HEK293 (cell line): ENCODE measurements at regions of chr11 and their contacts with region 1.

Region 1: DNA sequence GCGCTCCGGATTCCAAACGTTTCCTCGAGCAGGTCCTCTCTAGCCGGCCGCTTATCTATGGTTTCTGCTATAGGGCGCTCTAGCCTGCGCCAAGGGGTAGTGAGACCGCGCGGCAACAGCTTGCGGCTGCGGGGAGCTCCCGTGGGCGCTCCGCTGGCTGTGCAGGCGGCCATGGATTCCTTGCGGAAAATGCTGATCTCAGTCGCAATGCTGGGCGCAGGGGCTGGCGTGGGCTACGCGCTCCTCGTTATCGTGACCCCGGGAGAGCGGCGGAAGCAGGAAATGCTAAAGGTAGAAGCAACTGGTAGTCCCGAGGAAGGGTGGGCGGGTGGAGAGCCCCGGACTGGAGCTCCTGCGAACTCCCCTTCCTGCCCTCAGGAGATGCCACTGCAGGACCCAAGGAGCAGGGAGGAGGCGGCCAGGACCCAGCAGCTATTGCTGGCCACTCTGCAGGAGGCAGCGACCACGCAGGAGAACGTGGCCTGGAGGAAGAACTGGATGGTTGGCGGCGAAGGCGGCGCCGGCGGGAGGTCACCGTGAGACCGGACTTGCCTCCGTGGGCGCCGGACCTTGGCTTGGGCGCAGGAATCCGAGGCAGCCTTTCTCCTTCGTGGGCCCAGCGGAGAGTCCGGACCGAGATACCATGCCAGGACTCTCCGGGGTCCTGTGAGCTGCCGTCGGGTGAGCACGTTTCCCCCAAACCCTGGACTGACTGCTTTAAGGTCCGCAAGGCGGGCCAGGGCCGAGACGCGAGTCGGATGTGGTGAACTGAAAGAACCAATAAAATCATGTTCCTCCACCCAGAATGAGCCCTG is at the starts of genes LBHD1 and UQCC3:
- H3K4me3 ChIP-seq: peak within 1 kb of the TSS; percentile 84
- H3K27ac ChIP-seq: peak within 1 kb of the TSS; percentile 65
- H3K4me1 ChIP-seq: no peaks in the 10 kb centered on the region
- CTCF ChIP-seq: no peak

Region 2: GRCh38 chr11:62573592-62574362 is 98.0 kb before region 1 on chr11 and contains the start of gene EEF1G:
- CTCF ChIA-PET with region 1: interaction called, 4 read pairs
- POLR2A ChIA-PET with region 1: interaction called, 12 read pairs
- H3K4me3 ChIP-seq: peak within 1 kb of the TSS; percentile 90
- H3K27ac ChIP-seq: peak within 1 kb of the TSS; percentile 99
- H3K4me1 ChIP-seq: no peaks in the 10 kb centered on the region
- CTCF ChIP-seq: no peak

Region 3: DNA sequence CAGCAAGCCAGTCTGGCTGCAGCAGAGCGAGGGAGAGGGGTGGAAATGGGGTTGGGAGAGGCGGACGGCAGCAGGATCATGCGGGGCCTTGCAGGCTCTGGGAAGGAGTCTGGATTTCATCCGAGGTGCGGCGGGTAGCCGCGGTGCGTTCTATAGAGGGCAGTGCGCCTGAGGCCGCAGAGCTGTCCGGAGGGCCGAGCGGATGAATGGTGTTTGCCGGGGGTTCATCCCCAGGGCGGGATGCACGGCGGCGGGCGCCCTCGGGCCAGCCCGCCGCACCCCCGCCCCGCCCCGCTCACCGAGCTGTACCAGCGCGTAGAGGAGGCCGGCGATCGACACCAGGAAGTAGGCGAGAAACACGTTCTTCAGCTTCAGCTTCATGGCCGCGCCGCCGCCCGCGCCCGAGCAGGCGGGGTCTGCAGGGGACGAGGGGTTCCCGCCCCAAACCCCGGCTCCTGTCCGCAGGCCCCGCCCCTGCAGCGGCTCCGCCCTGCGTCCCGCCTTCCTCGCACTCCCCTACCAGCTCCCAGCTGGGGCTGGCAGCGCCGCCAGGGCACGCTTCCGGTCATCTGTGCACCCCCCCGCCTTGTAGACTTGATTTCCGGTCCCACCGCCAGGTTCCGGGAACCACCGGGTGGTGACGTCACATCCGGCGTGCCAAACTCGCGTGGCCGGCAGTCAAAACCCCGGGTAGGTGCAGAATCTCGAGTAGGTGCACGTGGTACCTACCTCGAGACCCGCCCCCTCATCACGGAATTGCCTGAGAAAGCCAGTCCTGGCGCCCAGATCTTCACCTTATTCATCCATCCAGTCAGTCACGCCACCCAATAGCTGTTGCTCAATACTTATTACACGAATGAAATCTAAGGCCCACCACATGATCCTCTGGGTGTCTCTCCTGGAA is 50.0 kb before region 1 on chr11 and contains the start of gene B3GAT3:
- CTCF ChIA-PET with region 1: no interaction called
- POLR2A ChIA-PET with region 1: interaction called, 40 read pairs
- H3K4me3 ChIP-seq: peak within 1 kb of the TSS; percentile 71
- H3K27ac ChIP-seq: peak within 1 kb of the TSS; percentile 80
- H3K4me1 ChIP-seq: no peaks in the 10 kb centered on the region
- CTCF ChIP-seq: peak; percentile 5; the same call in 1 of the 2 replicates

Region 4: GRCh38 chr11:62652161-62653006 is 19.4 kb before region 1 on chr11:
- CTCF ChIA-PET with region 1: interaction called, 3 read pairs
- POLR2A ChIA-PET with region 1: interaction called, 72 read pairs
- H3K4me3 ChIP-seq: peak overlapping the region; percentile 99
- H3K27ac ChIP-seq: peak overlapping the region; percentile 70
- H3K4me1 ChIP-seq: no peaks in the 10 kb centered on the region
- CTCF ChIP-seq: no peak

Region 5: GRCh38 chr11:62694455-62695167 is 22.8 kb after region 1 on chr11:
- CTCF ChIA-PET with region 1: interaction called, 9 read pairs
- POLR2A ChIA-PET with region 1: interaction called, 12 read pairs
- H3K4me3 ChIP-seq: no peak overlapping the region
- H3K27ac ChIP-seq: no peak overlapping the region
- H3K4me1 ChIP-seq: no peaks in the 10 kb centered on the region
- CTCF ChIP-seq: peak; percentile 11; the same call in 1 of the 2 replicates

Region 6: GRCh38 chr11:62726915-62727763 is 55.4 kb after region 1 on chr11 and contains the start of gene HNRNPUL2:
- CTCF ChIA-PET with region 1: no interaction called
- POLR2A ChIA-PET with region 1: interaction called, 28 read pairs
- H3K4me3 ChIP-seq: peak within 1 kb of the TSS; percentile 93
- H3K27ac ChIP-seq: peak within 1 kb of the TSS; percentile 98
- H3K4me1 ChIP-seq: peaks cover 4% of the 10 kb centered on the region; the same call in 1 of the 2 replicates
- CTCF ChIP-seq: no peak

Region 7: GRCh38 chr11:62787005-62787759 is 115.4 kb after region 1 on chr11 and contains the start of gene TMEM179B:
- CTCF ChIA-PET with region 1: no interaction called
- POLR2A ChIA-PET with region 1: interaction called, 10 read pairs
- H3K4me3 ChIP-seq: peak within 1 kb of the TSS; percentile 87
- H3K27ac ChIP-seq: peak within 1 kb of the TSS; percentile 76
- H3K4me1 ChIP-seq: no peaks in the 10 kb centered on the region
- CTCF ChIP-seq: peak; percentile 97